Activated CD4-positive, alpha-beta T cell treated with anti-CD3 and anti-CD28 coated beads for 36 hours (primary cell): ENCODE measurements at regions of chr4 and their contacts with region 1.

Region 1: DNA sequence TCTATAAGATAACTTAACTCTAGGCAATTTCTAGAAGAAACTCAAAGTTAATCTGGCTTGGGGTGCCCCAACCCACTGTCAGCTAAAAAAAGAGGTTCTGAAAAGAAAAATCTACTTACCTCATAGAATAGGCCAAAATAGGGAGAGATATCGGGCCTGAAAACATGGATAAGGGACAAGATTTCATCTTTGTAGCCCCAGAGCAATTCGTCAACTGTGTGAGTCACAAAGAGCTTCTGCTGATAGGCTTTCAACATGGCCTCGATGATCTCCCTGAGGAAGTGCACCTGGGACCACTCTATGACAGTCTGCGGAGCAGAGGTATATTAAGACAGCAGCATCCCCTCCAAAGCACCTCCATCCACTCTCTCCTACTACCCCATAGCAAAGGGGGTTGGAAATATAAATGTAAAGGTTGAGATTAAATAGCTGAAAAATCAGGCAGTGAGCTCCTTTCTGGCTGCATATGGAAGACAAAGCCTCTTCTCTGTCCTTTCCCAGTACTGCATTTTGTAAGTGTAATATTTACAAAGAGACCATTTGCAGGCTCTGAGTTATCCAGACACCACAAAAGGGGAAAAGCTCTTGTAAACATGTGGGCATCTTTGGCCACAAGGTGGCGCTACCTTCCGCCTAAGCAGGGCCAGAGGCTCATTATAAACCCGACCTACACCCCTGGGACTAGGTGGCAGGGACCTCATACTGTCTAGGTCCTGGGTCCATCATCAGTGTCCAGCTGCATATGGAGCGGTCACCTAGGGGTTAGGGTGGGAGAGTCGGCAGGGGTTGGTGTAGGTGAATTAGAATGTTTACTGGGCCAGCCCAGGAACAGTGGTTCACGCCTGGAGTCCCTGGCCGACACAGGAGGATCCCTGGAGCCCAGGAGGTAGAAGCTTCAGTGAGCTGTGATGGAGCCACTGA is 31.5 kb upstream of the NUP54 start:
- DNase-seq: peak; percentile 93
- ATAC-seq: peak; percentile 97
- H3K4me3 Mint-ChIP-seq: no peak overlapping the region
- H3K27ac Mint-ChIP-seq: no peak overlapping the region
- H3K4me1 Mint-ChIP-seq: peaks cover 2% of the 10 kb centered on the region
- H3K27me3 Mint-ChIP-seq: no peaks in the 10 kb centered on the region

Region 2: DNA sequence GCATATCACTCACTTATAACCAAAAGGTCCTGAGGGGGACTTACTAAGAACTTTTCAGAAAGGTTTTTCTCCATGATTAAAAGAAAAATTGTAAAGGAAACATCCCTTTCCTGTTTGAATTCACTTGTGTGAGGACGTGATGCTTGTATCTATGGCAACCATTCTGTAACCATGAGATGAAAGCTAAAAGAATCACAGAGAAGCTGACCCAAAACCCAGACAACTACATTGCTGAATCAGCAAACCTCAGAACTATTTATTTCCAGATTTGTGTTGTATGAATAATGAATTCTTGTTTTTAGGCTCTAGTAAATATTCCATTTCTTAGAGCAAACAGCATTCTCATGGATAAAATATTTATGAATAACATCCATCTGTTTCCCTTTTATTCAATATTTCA is 756.7 kb before region 1 on chr4:
- CTCF ChIA-PET with region 1: no interaction called
- POLR2A ChIA-PET with region 1: no interaction called
- intact Hi-C with region 1: no loop called
- DNase-seq: no peak
- ATAC-seq: no peak
- H3K4me3 Mint-ChIP-seq: no peak overlapping the region
- H3K27ac Mint-ChIP-seq: no peak overlapping the region
- H3K4me1 Mint-ChIP-seq: no peaks in the 10 kb centered on the region
- H3K27me3 Mint-ChIP-seq: peaks cover 11% of the 10 kb centered on the region

Region 3: DNA sequence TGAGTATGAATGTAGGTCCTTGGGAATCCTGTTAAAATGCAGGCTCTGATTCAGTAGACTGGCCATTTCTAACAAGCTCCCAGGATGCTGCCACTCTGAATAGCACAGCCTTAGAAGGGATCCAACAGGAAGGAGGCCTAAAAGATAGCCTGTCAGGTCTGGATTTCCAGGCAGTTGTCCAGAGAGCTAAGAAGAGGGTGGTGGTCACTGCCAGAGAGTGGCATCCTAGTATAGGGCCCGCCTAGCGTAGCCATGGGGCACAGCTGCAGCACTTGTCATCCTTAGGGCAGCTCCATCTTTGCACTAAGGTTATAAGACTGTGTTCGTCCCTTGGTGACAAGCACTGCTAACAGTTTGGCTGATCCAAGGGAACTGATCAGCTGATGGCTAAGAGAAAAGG is 11.0 kb before region 1 on chr4:
- CTCF ChIA-PET with region 1: interaction called, 14 read pairs
- POLR2A ChIA-PET with region 1: no interaction called
- intact Hi-C with region 1: no loop called
- DNase-seq: no peak
- ATAC-seq: no peak
- H3K4me3 Mint-ChIP-seq: no peak overlapping the region
- H3K27ac Mint-ChIP-seq: no peak overlapping the region
- H3K4me1 Mint-ChIP-seq: no peaks in the 10 kb centered on the region
- H3K27me3 Mint-ChIP-seq: no peaks in the 10 kb centered on the region

Region 4: DNA sequence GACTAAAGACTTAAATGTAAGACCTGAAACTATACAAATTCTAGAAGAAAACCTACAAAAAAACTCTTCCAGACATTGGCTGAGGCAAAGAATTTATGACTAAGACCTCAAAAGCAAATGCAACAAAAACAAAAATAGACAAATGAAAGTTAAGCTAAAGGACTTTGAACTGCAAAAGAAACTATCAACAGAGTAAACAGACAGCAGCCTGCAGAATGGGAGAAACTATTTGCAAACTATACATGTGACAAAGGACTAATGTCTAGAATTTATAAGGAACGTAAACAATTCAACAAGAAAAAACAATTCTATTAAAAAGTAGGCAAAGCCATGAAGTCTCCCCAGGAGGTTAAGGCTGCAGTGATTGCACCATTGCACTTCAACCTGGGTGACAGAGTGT is 80.9 kb after region 1 on chr4:
- CTCF ChIA-PET with region 1: interaction called, 17 read pairs
- POLR2A ChIA-PET with region 1: no interaction called
- intact Hi-C with region 1: no loop called
- DNase-seq: no peak
- ATAC-seq: no peak
- H3K4me3 Mint-ChIP-seq: no peak overlapping the region
- H3K27ac Mint-ChIP-seq: no peak overlapping the region
- H3K4me1 Mint-ChIP-seq: no peaks in the 10 kb centered on the region
- H3K27me3 Mint-ChIP-seq: peaks cover 13% of the 10 kb centered on the region

Region 5: DNA sequence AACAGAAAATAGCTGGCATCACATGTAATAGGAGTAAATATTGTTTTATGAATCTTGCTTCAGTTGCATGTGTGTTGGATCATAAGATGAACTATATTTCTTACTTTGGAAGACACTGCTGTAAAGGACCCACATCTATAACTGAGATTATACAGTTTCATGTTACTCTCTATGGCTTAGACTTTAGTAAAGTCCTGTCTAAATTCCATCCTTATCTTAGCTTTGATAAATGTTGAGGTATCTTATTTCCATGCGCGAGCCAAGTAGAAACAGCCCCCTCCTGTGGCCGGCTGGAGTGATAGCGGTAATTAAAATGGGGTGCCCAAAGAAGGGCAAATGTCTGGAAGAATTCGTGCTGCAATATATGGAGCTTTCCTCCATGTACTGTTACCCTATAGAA is 198.3 kb after region 1 on chr4:
- CTCF ChIA-PET with region 1: interaction called, 141 read pairs
- POLR2A ChIA-PET with region 1: interaction called, 3 read pairs
- intact Hi-C with region 1: loop called (anchors 1 to 2 kb)
- DNase-seq: peak; percentile 74
- ATAC-seq: peak; percentile 30
- H3K4me3 Mint-ChIP-seq: no peak overlapping the region
- H3K27ac Mint-ChIP-seq: no peak overlapping the region
- H3K4me1 Mint-ChIP-seq: no peaks in the 10 kb centered on the region
- H3K27me3 Mint-ChIP-seq: no peaks in the 10 kb centered on the region